Activated naive CD4-positive, alpha-beta T cell treated with anti-CD3 and anti-CD28 coated beads for 36 hours (primary cell): ENCODE measurements at regions of chr10 and their contacts with region 1.

Region 1: DNA sequence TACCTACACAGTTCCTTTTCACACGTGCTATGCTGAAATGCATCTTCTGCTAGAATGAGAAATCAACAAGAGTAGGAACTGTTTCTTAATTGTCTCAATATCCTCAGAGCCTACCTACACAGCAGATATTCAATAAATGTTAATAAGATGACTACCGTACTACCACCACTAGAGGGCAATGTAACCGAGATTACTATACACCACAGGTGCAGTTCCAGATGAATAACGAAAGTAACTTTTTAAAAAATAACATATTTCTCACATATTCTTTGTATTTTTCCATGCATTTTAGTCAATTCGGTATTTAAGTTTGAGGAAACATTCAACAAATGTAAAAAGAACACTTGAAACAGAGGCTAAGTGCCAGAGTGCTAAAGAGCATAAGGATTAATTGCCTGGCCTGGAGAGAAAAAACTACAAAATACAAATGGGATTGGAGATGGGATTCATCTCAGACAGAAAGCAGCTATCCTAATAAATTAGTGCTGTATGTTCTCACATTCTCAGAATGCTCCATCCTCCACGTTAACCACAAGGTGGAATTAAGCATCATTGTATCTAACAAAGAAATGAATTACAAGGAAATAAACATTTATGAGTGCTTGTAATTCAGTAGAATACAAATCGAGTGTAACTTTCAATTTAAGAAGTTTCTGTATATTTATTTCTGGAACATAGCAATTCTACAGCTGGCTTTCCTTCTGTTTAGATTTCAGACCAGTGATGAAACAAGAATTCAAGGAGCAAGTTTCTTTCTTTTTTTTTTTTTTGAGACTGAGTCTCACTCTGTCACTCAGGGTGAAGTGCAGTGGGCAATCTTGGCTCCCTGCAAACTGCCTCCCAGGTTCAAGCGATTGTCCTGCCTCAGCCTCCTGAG is 20.3 kb upstream of the HECTD2 start:
- DNase-seq: no peak
- H3K4me3 Mint-ChIP-seq: no peak overlapping the region
- H3K27ac Mint-ChIP-seq: no peak overlapping the region
- H3K4me1 Mint-ChIP-seq: peaks cover 4% of the 10 kb centered on the region
- H3K27me3 Mint-ChIP-seq: peaks cover 12% of the 10 kb centered on the region

Region 2: GRCh38 chr10:91313796-91314485 is 75.9 kb before region 1 on chr10:
- CTCF ChIA-PET with region 1: no interaction called
- intact Hi-C with region 1: no loop called
- DNase-seq: peak; percentile 50
- H3K4me3 Mint-ChIP-seq: no peak overlapping the region
- H3K27ac Mint-ChIP-seq: peak overlapping the region; percentile 82
- H3K4me1 Mint-ChIP-seq: peaks cover 11% of the 10 kb centered on the region
- H3K27me3 Mint-ChIP-seq: peaks cover 4% of the 10 kb centered on the region

Region 3: GRCh38 chr10:91328320-91328984 is 61.4 kb before region 1 on chr10:
- CTCF ChIA-PET with region 1: no interaction called
- intact Hi-C with region 1: no loop called
- DNase-seq: no peak
- H3K4me3 Mint-ChIP-seq: no peak overlapping the region
- H3K27ac Mint-ChIP-seq: no peak overlapping the region
- H3K4me1 Mint-ChIP-seq: no peaks in the 10 kb centered on the region
- H3K27me3 Mint-ChIP-seq: peaks cover 8% of the 10 kb centered on the region

Region 4: DNA sequence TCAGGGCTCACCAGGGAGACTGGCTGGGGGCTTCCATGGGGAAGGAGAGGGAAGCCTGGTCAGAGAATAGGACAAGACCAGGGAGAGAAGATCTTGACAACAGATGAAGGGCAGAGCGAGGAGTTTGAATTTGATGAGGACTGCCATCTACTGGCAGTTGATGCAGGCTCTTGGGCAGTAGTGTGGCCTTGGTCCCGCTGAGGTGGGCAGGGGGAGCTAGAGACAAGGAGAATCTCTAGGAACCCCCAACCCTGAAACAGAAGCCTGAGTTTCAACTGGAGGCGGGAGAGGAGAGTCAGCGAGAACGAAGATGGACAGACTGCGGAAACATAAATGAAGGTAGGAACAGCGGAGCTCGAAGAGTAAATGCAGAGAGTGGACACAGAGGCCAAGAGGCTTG is 162.0 kb after region 1 on chr10:
- CTCF ChIA-PET with region 1: interaction called, 3 read pairs
- intact Hi-C with region 1: loop called (anchors 1 kb)
- DNase-seq: peak; percentile 26
- H3K4me3 Mint-ChIP-seq: no peak overlapping the region
- H3K27ac Mint-ChIP-seq: no peak overlapping the region
- H3K4me1 Mint-ChIP-seq: no peaks in the 10 kb centered on the region
- H3K27me3 Mint-ChIP-seq: no peaks in the 10 kb centered on the region

Region 5: DNA sequence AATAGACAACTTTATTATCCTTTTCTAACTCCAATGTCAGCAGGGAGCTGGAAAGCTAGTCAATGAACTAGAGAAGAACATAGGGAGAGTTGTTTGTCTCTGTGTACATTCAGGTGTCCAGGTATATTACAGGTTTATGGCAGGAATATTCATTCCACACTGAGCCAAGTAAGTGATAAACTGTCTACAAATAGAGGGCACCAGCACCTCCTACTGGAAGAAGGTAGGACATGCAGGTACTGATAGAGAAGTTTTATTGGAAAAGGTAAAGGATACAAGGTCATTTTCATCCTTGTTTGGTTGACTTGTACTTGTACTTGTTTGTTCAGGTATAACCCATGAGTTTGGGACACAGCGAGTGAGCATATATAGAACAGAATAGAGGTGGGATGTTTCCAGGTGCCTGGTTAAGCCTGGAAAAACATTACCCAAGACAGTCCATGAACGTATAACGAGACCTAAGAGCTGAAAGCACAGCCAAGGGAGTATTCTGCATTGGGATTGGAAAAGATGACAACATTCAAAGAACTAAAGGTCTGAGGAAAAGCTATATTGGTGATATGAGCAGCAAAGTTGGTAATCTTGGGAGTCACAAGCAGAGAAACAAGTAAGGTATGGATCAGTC is 304.4 kb after region 1 on chr10:
- CTCF ChIA-PET with region 1: interaction called, 3 read pairs
- intact Hi-C with region 1: loop called (anchors 1 kb)
- DNase-seq: peak; percentile 37
- H3K4me3 Mint-ChIP-seq: no peak overlapping the region
- H3K27ac Mint-ChIP-seq: no peak overlapping the region
- H3K4me1 Mint-ChIP-seq: peaks cover 4% of the 10 kb centered on the region
- H3K27me3 Mint-ChIP-seq: peaks cover 5% of the 10 kb centered on the region